ENCODE measurements at regions of chr14 and their contacts with region 1.

Region 1: DNA sequence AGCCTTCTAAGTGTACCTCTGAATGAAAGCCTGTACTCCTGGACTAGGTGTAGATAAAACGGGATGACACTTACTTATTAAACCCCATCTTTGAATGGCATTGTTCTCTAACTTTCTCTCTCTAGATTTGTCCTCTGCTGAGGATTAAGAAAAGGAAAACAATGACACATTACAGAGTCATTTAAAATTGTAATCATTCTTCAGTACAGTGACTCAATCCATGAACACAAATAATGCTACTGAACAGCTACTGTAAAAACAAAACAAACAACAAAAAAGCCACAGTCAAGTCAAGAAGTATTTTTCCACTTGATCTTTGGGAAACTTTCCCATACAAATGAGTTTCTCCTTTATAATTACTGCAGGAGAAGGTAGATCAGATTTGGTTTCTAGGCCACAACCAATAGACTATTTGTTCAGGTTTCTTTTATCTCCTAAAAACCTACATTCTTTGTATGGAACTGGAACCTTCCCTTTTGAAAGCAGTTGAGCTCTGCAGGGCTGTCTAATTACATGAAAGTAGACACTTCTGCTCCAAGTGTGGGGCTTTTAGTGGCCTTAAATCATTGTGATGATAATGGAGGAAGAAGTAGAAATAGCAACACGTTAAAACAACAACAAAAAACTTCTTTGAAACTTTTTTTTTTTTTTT is 219.1 kb downstream of the ESR2 start:
- DNase-seq: peak; percentile 90
- ATAC-seq: peak; percentile 98
- H3K4me3 ChIP-seq: no peak overlapping the region
- H3K27ac ChIP-seq: peak overlapping the region; percentile 70
- H3K4me1 ChIP-seq: peaks cover 19% of the 10 kb centered on the region
- H3K27me3 ChIP-seq: no peaks in the 10 kb centered on the region
- CTCF ChIP-seq: no peak

Region 2: GRCh38 chr14:64253672-64254071 is 178.6 kb after region 1 on chr14:
- CTCF ChIA-PET with region 1: no interaction called
- POLR2A ChIA-PET with region 1: no interaction called
- intact Hi-C with region 1: loop called (anchors 5 kb)
- DNase-seq: peak; percentile 93
- ATAC-seq: peak; percentile 95
- H3K4me3 ChIP-seq: peak overlapping the region; percentile 41; the same call in 1 of the 2 replicates
- H3K27ac ChIP-seq: peak overlapping the region; percentile 40
- H3K4me1 ChIP-seq: peaks cover 17% of the 10 kb centered on the region
- H3K27me3 ChIP-seq: no peaks in the 10 kb centered on the region
- CTCF ChIP-seq: no peak